Tibial artery (tissue), 4 donors: ENCODE measurements at regions of chr11 and their contacts with region 1.

Region 1: DNA sequence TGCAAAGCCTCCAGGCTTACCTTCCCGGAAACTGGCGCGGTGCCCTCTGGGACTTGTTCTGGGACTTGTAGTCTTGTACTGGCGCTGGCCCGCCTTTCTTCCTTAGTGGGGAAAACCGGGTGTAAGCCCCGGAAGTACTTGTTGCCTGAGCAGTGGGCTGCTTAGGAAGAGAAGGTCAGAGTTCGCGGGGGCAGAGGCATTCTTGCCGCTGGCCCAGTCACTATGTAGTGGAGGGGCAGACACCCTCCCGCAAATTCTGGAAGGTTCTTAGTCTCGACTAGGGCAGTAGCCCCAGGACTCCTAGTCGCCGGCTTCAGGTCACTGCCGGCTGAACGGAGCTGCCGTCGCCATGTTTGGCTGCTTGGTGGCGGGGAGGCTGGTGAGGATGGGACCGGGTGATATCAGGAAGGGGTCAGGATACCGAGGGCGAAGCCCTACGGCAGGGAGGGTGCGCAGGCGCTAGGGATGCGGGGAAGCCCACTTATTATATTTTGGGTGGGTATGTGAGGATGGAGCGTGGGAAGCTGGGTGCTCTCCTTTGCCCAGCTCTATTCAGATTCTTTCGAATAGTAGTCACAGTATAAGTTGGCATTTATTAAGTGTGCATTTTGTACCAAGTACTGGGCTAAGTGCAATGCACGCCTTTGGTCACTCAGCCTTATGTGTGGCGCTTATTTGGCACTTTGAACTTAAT is at the start of gene HIKESHI:
- DNase-seq: peak; percentile 100
- H3K4me3 ChIP-seq: peak within 1 kb of the TSS; percentile 87 to 91
- H3K27ac ChIP-seq: peak within 1 kb of the TSS; percentile 87 to 94
- H3K4me1 ChIP-seq: peaks cover 0 to 33% (median 11%) of the 10 kb centered on the region in 4 donors
- H3K27me3 ChIP-seq: no peaks in the 10 kb centered on the region
- CTCF ChIP-seq: no peak

Region 2: GRCh38 chr11:86244522-86245368 is 57.5 kb before region 1 on chr11 and contains the start of gene EED:
- intact Hi-C with region 1: loop called (anchors 5 kb)
- DNase-seq: peak; percentile 91 to 97
- H3K4me3 ChIP-seq: peak within 1 kb of the TSS; percentile 76 to 81
- H3K27ac ChIP-seq: peak within 1 kb of the TSS; percentile 94 to 96
- H3K4me1 ChIP-seq: peaks cover 0 to 32% (median 15%) of the 10 kb centered on the region in 4 donors
- H3K27me3 ChIP-seq: no peaks in the 10 kb centered on the region
- CTCF ChIP-seq: no peak